K562 (cell line): ENCODE measurements at regions of chr14 and their contacts with region 1.

Region 1: DNA sequence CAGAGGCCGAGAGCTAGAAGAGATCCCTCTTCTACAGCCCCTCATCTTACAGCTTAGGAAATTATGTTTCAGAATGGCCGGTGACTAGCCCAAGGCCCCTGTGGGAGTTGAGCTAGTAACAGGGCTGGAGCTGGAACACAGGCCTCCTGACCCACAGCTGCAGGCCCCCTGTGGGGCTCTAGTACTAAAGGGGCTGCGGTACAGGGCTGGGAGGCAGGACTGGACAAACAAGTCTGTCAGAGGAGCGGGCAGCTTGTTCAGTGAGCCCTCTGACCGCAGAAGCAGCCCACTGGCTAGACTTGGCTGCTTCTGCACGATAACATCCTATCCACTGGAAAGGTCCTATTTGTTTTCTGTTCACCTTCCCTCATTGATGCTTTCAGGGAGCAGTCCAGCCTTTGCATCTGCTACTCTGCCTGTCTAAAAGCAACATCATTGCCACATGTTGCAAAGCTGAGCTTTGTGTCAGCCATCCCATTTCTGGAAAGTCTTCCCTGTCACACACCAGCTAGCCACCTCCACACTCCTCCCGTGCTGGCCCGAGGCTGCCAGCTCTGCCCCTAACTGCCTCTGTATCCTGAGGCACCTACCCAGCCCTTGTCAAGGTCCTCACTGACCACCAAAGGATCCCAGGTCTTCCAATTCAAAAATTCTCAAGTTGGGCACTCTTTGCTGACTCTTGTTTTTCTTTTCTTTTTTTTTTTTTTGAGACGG is 10.2 kb downstream of the PSMC1 start:
- DNase-seq: no peak
- ATAC-seq: no peak
- H3K4me3 ChIP-seq: no peak overlapping the region
- H3K27ac ChIP-seq: no peak overlapping the region
- H3K4me1 ChIP-seq: no peaks in the 10 kb centered on the region
- H3K27me3 ChIP-seq: no peaks in the 10 kb centered on the region
- CTCF ChIP-seq: no peak
- EP300 ChIP-seq: no peak
- POLR2A ChIP-seq: no peak
- RAD21 ChIP-seq: no peak

Region 2: DNA sequence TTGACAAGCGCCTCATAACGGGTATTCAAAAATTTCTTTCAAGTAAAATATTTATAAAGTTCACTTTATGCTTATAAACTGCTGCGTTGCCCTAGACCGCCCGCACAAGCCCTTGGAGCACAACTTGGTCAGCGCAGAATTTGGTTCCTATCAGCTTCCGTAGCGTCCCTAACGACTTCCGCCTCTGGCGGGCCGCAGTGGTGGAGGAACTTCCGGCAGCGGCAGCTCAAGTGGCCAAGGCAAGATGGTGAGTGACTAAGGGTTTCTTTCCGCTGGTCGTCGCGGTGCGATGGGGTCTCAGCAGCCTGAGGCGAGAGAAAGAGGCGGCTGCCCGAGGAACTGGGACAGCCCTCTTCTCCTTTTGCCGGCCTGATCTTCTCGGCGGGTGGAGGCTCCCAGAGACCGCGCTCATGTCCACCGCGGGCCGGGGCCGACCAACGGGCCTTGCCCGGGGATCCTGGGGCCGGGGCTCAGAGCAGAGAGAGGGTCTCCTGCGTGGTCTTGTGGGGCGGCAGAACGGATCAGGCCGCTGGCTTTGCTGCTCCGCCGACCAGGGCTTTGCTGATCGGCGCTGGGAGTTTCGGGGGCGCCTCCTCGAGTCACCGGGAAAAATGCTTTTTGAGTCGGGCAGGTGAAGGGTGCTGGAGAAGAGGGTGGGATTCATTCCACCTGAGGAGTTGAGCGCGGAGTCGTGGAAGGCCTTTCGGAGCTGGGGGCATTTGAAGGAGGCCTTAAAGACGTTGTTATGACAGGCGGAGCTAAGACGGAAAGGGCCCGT is 10.1 kb before region 1 on chr14 and contains the start of gene PSMC1:
- CTCF ChIA-PET with region 1: no interaction called
- POLR2A ChIA-PET with region 1: interaction called, 35 read pairs
- in situ Hi-C with region 1: no loop called
- intact Hi-C with region 1: no loop called
- DNase-seq: peak; percentile 76 to 92 (median 80)
- ATAC-seq: peak; percentile 97
- H3K4me3 ChIP-seq: peak within 1 kb of the TSS; percentile 97
- H3K27ac ChIP-seq: peak within 1 kb of the TSS; percentile 89
- H3K4me1 ChIP-seq: peaks cover 0 to 3% of the 10 kb centered on the region in 2 experiments; a peak in 2 of 5 replicates
- H3K27me3 ChIP-seq: peaks cover 0 to 5% of the 10 kb centered on the region in 2 experiments; a peak in 1 of 5 replicates
- CTCF ChIP-seq: no peak
- EP300 ChIP-seq: peak; percentile 58
- POLR2A ChIP-seq: peak; percentile 87
- RAD21 ChIP-seq: no peak
- polyA plus RNA-seq, gene PSMC1: 165 to 276 TPM

Region 3: DNA sequence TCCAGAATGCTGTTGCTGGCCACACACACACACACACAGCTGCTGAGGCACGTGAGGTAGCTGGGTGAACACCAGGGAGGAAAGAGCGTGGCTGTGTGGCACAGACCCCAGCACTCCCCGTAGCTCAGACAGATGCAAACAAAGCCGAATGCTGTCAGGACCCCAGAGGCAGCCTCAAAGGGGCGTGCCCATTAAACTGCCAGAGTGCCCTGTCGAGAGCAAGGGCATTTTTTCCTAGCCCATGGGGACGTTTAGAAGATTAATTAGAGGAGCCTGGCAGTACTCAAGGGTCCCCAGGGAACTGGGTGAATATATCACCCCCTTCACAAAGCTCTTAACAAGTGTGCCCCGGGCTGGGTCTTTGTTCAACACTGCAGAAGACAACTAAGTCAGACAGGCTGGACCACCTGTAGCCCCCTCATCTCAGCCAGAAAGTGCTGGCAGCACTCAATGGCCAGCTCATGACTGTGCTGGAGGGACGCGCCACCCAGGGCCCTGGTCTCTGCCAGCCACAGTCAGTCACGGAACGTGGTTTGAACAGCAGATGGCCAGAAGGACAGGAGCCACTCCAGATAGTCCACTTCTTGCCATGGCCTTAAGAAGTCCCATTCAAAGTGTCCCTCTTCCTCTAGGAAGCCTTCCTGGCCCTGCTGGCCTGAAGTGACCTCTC is 512.1 kb after region 1 on chr14:
- CTCF ChIA-PET with region 1: no interaction called
- POLR2A ChIA-PET with region 1: no interaction called
- in situ Hi-C with region 1: no loop called
- intact Hi-C with region 1: no loop called
- DNase-seq: no peak
- ATAC-seq: no peak
- H3K4me3 ChIP-seq: no peak overlapping the region
- H3K27ac ChIP-seq: no peak overlapping the region
- H3K4me1 ChIP-seq: peaks cover 2 to 6% of the 10 kb centered on the region in 2 experiments; a peak in 3 of 5 replicates
- H3K27me3 ChIP-seq: no peaks in the 10 kb centered on the region
- CTCF ChIP-seq: no peak
- EP300 ChIP-seq: no peak
- POLR2A ChIP-seq: no peak
- RAD21 ChIP-seq: no peak